MCF 10A (cell line): ENCODE measurements at regions of chr7 and their contacts with region 1.

Region 1: GRCh38 chr7:101287032-101287431 is 34.6 kb downstream of the IFT22 start:
- DNase-seq: no peak
- H3K4me3 Mint-ChIP-seq: no peak overlapping the region
- H3K27ac Mint-ChIP-seq: no peak overlapping the region
- H3K4me1 Mint-ChIP-seq: peaks cover 10% of the 10 kb centered on the region
- H3K27me3 Mint-ChIP-seq: peaks cover 36% of the 10 kb centered on the region
- CTCF ChIP-seq: no peak

Region 2: DNA sequence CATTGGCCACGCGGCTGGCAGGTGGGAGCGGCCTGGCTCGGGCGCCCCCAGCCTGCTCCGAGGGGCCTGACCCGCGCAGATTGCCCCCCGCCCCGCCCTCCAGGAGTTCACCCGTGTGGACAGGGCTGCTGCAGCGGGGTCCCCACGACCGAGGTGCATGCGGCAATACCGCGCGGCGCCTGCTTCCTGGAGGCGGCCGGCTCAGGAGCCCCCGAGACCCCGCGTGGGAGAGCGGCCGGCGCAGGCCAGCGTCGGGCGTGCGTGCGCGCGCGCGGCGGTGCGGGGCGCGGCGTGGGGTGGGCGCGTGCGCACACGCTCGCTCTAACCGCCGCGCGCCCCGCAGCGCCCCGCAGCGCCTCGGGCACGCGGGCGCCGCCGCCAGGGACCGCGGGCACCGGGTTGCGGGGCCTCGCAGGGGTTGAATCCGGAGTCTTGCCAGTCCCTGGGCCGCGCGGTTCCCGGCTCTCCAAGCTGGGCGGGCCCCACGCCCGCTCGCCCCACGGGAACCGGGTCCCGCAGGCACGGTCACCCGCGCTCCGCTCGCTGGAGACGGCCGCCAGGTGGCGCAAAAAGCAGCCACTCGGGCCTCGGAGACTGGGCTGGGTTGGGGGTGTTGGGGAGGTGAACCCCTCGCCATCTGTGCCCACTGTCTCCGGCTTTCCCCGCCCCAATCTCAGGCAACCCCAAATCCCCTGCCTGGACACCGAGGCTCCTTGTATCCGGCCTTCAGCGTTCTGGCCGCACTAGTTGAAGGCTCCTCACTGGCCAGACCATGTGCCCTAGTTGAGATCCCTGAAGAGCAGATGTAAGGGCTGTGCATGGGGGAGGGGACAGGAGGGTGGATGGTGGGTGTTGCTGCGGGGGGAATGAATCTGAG is 390.1 kb before region 1 on chr7:
- CTCF ChIA-PET with region 1: interaction called, 4 read pairs
- POLR2A ChIA-PET with region 1: interaction called, 3 read pairs
- intact Hi-C with region 1: loop called (anchors 2 kb)
- DNase-seq: no peak
- H3K4me3 Mint-ChIP-seq: no peak overlapping the region
- H3K27ac Mint-ChIP-seq: no peak overlapping the region
- H3K4me1 Mint-ChIP-seq: peaks cover 6% of the 10 kb centered on the region
- H3K27me3 Mint-ChIP-seq: peaks cover 36% of the 10 kb centered on the region
- CTCF ChIP-seq: peak; percentile 75

Region 3: DNA sequence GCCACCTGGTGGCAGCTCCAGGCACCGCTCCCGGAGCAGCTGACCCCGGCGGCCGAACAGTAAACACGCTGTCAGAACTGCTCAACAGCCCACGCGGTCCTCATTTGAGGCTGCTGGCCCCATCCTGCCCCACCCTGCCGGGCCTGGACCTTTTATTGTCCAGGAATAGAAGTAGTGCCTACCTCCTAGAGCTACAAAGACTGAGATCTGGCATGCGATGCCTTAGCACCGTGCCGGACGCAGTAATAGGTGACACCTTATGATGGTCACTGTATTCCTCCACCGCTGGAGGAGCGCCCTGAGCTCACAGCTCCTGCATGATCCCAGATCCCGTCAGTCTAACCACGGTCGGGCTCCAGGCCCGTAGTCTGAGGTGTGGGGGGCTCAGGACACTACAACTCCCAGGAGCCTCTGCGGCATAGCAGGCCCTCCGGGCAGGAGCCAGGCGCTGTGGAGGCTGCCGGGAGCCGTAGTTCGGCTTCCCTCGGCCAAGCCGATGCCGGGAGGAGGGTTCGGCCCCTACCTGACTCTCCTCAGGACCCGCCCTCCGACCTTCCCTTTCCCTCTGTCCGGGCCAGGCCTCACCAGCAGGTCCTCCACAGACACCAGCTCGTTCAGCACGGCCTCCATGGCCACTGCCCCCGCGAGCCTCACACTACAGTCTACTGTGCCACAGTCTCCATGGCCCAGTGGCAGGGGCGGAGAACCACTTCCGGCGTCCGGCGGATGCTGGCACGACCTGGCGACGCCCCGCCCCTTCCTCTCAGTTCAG is 42.5 kb before region 1 on chr7 and contains the start of gene FIS1:
- CTCF ChIA-PET with region 1: interaction called, 18 read pairs
- POLR2A ChIA-PET with region 1: interaction called, 8 read pairs
- intact Hi-C with region 1: loop called (anchors 5 kb)
- DNase-seq: peak; percentile 87
- H3K4me3 Mint-ChIP-seq: peak within 1 kb of the TSS; percentile 80
- H3K27ac Mint-ChIP-seq: peak within 1 kb of the TSS; percentile 97
- H3K4me1 Mint-ChIP-seq: peaks cover 5% of the 10 kb centered on the region
- H3K27me3 Mint-ChIP-seq: no peaks in the 10 kb centered on the region
- CTCF ChIP-seq: peak; percentile 76
- total RNA-seq, gene FIS1: 213 and 221 TPM in 2 replicates

Region 4: GRCh38 chr7:101265622-101266516 is 21.2 kb before region 1 on chr7:
- CTCF ChIA-PET with region 1: interaction called, 14 read pairs
- POLR2A ChIA-PET with region 1: interaction called, 4 read pairs
- intact Hi-C with region 1: no loop called
- DNase-seq: no peak
- H3K4me3 Mint-ChIP-seq: no peak overlapping the region
- H3K27ac Mint-ChIP-seq: no peak overlapping the region
- H3K4me1 Mint-ChIP-seq: no peaks in the 10 kb centered on the region
- H3K27me3 Mint-ChIP-seq: no peaks in the 10 kb centered on the region
- CTCF ChIP-seq: no peak

Region 5: DNA sequence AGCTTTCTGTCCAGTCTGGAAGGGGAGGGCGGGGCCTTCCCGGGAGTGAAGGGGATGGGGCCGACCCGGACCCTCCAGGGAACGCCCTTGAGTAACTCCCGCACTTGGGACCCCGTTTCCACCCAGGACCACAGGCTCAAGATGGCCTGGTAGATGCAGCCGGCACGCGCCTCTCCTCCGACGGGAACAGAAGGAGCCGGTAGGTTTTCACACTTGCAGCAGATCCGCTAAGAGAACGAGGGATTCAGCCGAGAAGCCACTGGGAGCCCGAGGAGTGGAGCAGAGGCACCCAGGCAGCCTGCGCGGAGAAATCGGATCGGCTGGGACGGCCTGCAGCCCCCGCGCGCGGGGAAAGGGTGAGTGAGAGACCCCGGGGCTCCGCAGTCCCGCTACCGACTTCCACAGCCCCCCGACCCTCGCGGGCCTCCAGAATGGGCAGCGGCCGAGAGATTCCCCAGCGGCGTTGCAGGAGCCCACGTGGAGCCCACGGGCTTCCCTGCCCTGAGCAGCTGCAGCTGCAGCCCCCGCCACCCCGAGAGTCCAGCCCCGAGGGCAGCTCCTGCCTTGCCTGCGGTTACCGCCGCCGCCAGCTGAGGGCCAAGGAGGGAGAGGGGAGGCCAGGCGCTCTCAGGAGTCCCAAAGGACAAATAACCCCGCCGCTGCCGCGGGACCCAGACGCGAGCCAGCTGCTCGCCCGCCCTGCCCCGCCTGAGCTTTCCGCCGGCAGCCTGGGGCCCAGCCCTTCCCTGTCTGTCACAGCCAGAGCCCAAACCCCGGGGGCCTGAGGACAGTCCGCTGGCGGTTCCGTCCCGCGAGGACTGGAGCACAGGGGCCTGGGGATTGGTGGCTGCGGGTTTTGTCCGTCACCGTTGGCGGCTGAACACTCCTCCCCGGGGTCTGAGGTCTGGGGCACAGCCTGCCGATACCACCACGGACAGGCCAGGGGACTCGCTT is 12.8 kb after region 1 on chr7:
- CTCF ChIA-PET with region 1: interaction called, 13 read pairs
- POLR2A ChIA-PET with region 1: no interaction called
- intact Hi-C with region 1: no loop called
- DNase-seq: no peak
- H3K4me3 Mint-ChIP-seq: no peak overlapping the region
- H3K27ac Mint-ChIP-seq: no peak overlapping the region
- H3K4me1 Mint-ChIP-seq: no peaks in the 10 kb centered on the region
- H3K27me3 Mint-ChIP-seq: peaks cover 25% of the 10 kb centered on the region
- CTCF ChIP-seq: no peak